CD14-positive monocyte (primary cell): ENCODE measurements at regions of chr2 and their contacts with region 1.

Region 1: DNA sequence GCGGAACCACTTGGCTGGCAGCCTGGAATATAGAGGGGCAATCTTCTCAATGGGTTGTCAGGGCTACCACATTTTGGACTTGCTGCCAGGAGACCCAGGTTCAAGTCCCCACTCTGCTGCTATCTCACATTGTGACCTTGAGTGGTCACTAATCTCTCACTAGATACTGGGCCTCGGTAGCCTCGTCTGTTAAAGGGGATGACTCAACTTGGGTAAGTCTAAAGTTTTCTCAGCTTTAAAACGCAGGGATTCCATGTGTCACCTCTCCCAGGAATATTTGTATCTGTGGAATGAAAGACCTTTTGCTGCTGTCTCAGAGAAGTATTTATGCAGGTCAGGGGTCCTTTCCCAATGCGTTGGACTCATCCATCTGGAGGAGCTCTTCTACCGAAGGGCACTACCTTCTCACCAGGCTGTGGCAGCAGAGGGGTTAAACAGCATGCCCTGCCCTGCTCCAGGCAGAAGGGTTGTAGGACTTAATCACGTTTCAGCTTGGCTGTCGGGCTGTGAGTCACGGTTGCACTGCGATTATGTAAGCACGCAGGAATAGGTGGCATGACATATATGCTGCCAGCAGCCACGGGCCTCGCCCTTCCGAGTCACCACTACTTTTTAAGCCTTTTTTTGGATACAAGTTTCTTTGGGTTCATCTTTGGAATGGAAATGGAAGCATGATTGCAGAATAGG is 86.5 kb downstream of the SEMA4F start:
- DNase-seq: peak; percentile 97 to 98 (median 98)
- H3K4me3 ChIP-seq: peak overlapping the region in 1 of 3 experiments; percentile 54
- H3K4me3 Mint-ChIP-seq: peak overlapping the region in 1 of 2 donors; percentile 66
- H3K27ac ChIP-seq: peak overlapping the region; percentile 92 to 94
- H3K27ac Mint-ChIP-seq: peak overlapping the region; percentile 92 to 97 (median 95)
- H3K4me1 ChIP-seq: peaks cover 32 to 36% of the 10 kb centered on the region in 2 donors
- H3K4me1 Mint-ChIP-seq: peaks cover 40% of the 10 kb centered on the region
- H3K27me3 ChIP-seq: no peaks in the 10 kb centered on the region
- H3K27me3 Mint-ChIP-seq: peaks cover 0 to 2% (median 0%) of the 10 kb centered on the region in 3 donors
- CTCF ChIP-seq: no peak

Region 2: DNA sequence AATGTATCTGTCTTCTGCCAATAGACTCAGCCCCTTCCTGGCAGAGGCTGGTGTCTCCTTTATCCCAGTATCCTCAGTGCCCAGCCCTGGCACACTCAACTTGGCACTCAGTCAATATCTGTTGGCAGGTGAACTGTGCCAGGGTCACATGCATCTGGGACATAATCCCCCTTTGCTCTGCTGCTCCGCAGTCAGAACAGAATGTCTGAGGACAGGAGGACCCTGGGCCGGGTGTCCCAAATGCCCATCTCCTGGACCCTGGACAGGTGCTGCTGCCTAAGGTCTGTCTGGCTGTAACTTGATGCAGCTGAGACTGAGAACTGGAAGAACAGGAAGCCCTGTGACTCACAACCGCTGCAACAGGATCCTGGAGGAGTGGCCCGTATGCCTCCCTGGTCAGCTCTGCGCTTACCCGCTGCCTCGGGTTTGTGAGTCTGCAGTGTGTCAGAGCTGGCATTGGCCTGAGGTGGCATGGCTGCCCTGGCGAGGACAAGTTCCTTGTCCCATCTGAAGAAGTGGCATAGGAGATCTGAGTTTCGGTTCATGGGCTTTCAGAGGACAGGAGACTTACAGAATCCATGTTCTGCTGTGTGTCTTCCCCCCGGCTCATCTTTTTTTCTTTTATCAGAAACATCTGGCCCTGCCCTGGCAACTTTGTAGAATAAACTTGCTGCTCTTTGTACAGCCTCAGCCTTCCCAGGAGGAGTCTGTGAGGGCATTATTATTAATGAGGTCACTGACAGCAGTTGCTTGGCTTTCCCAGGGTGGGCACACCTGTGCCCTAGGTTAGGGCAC is 104.9 kb after region 1 on chr2:
- intact Hi-C with region 1: loop called in 1 of 2 experiments (anchors 5 kb)
- DNase-seq: peak; percentile 95 to 98 (median 97)
- H3K4me3 ChIP-seq: peak overlapping the region in 1 of 3 experiments; percentile 54
- H3K4me3 Mint-ChIP-seq: peak overlapping the region; percentile 35 to 56
- H3K27ac ChIP-seq: peak overlapping the region; percentile 94 to 96
- H3K27ac Mint-ChIP-seq: peak overlapping the region; percentile 96 to 100 (median 99)
- H3K4me1 ChIP-seq: peaks cover 99 to 100% of the 10 kb centered on the region in 2 donors
- H3K4me1 Mint-ChIP-seq: peaks cover 98% of the 10 kb centered on the region
- H3K27me3 ChIP-seq: no peaks in the 10 kb centered on the region
- H3K27me3 Mint-ChIP-seq: peaks cover 0 to 2% (median 0%) of the 10 kb centered on the region in 3 donors
- CTCF ChIP-seq: no peak